IMR-90 (cell line): ENCODE measurements at regions of chr5 and their contacts with region 1.

Region 1: GRCh38 chr5:31487506-31487905 is 44.4 kb downstream of the DROSHA start:
- DNase-seq: peak; percentile 11
- ATAC-seq: no peak
- H3K4me3 ChIP-seq: no peak overlapping the region
- H3K27ac ChIP-seq: no peak overlapping the region
- H3K4me1 ChIP-seq: peaks cover 4% of the 10 kb centered on the region; the same call in 1 of the 2 replicates
- H3K27me3 ChIP-seq: no peaks in the 10 kb centered on the region
- CTCF ChIP-seq: peak; percentile 47
- POLR2A ChIP-seq: no peak
- RAD21 ChIP-seq: peak; percentile 53

Region 2: DNA sequence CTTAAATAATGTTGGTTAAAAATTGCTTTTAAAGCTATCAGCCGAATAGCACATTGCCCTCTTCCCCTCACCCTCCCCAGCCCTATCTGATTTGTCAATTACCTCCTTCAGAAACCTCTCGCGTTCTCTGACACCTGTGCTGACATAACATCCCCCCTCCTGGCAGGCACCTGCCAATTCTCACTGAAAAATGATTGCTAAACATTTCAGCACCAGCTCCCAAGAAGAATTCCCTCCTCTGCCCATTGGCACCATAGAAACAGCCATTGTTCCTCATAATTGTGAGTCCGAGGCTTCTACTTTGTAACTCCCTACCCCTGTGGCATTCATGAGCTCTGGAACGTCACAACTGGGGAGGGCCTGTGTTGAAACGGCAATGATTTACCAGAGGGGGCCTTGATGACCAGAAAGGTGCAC is 273.8 kb before region 1 on chr5:
- CTCF ChIA-PET with region 1: no interaction called
- POLR2A ChIA-PET with region 1: no interaction called
- dilution Hi-C with region 1: no loop called
- in situ Hi-C with region 1: no loop called
- intact Hi-C with region 1: no loop called
- DNase-seq: no peak
- ATAC-seq: no peak
- H3K4me3 ChIP-seq: no peak overlapping the region
- H3K27ac ChIP-seq: no peak overlapping the region
- H3K4me1 ChIP-seq: peaks cover 7% of the 10 kb centered on the region; the same call in 1 of the 2 replicates
- H3K27me3 ChIP-seq: no peaks in the 10 kb centered on the region
- CTCF ChIP-seq: no peak
- POLR2A ChIP-seq: no peak
- RAD21 ChIP-seq: no peak

Region 3: GRCh38 chr5:31232273-31232888 is 255.1 kb before region 1 on chr5:
- CTCF ChIA-PET with region 1: interaction called, 3 read pairs
- POLR2A ChIA-PET with region 1: no interaction called
- dilution Hi-C with region 1: no loop called
- in situ Hi-C with region 1: no loop called
- intact Hi-C with region 1: loop called (anchors 5 kb)
- DNase-seq: peak; percentile 74
- ATAC-seq: peak; percentile 90
- H3K4me3 ChIP-seq: no peak overlapping the region
- H3K27ac ChIP-seq: no peak overlapping the region
- H3K4me1 ChIP-seq: peaks cover 4% of the 10 kb centered on the region; the same call in 1 of the 2 replicates
- H3K27me3 ChIP-seq: no peaks in the 10 kb centered on the region
- CTCF ChIP-seq: peak; percentile 92
- POLR2A ChIP-seq: no peak
- RAD21 ChIP-seq: peak; percentile 95